ENCODE measurements at regions of chr1 and their contacts with region 1.

Region 1: DNA sequence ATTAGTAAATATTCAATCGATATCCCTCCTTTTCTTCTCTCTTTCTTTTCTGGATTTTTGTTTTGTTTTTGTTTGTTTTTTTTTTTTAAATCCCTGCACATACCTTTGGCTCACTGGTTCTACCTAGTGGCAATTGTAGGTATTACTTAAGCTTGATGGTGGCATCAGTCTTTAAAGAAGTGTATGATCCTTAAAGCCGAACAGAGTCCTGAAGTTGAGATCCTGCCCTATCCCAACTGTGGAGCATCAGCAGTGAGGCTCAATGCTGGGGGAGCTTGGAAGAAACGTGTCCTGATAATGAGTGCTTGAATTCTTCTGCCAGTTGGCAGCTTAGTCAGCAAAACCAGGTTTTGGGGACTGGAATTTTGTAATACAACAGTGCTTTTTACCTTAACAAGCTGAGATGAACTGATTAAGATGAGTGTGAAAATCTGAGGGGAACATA is 60.8 kb downstream of the FASLG start:
- DNase-seq: peak in 4 of 5 donors; percentile 54 to 60 (median 56)
- H3K4me3 ChIP-seq: no peak overlapping the region
- H3K4me3 Mint-ChIP-seq: peak overlapping the region in 1 of 8 donors; percentile 9
- H3K27ac ChIP-seq: no peak overlapping the region
- H3K27ac Mint-ChIP-seq: peak overlapping the region in 3 of 7 donors; percentile 3 to 37 (median 5)
- H3K4me1 ChIP-seq: peaks cover 16% of the 10 kb centered on the region
- H3K4me1 Mint-ChIP-seq: peaks cover 24 to 43% (median 31%) of the 10 kb centered on the region in 4 donors
- H3K27me3 ChIP-seq: no peaks in the 10 kb centered on the region
- H3K27me3 Mint-ChIP-seq: no peaks in the 10 kb centered on the region

Region 2: GRCh38 chr1:172429331-172430127 is 290.2 kb before region 1 on chr1:
- CTCF ChIA-PET with region 1: interaction called, 6 read pairs
- POLR2A ChIA-PET with region 1: no interaction called
- intact Hi-C with region 1: loop called (anchors 2 kb)
- DNase-seq: peak; percentile 49 to 63 (median 56)
- H3K4me3 ChIP-seq: no peak overlapping the region
- H3K4me3 Mint-ChIP-seq: peak overlapping the region in 2 of 8 donors; percentile 26 to 39
- H3K27ac ChIP-seq: no peak overlapping the region
- H3K27ac Mint-ChIP-seq: peak overlapping the region in 6 of 7 donors; percentile 5 to 72 (median 56)
- H3K4me1 ChIP-seq: peaks cover 59% of the 10 kb centered on the region
- H3K4me1 Mint-ChIP-seq: peaks cover 31 to 49% (median 41%) of the 10 kb centered on the region in 4 donors
- H3K27me3 ChIP-seq: no peaks in the 10 kb centered on the region
- H3K27me3 Mint-ChIP-seq: no peaks in the 10 kb centered on the region

Region 3: GRCh38 chr1:172545396-172546004 is 174.2 kb before region 1 on chr1:
- CTCF ChIA-PET with region 1: interaction called, 11 read pairs
- POLR2A ChIA-PET with region 1: no interaction called
- intact Hi-C with region 1: no loop called
- DNase-seq: no peak
- H3K4me3 ChIP-seq: no peak overlapping the region
- H3K4me3 Mint-ChIP-seq: no peak overlapping the region
- H3K27ac ChIP-seq: no peak overlapping the region
- H3K27ac Mint-ChIP-seq: no peak overlapping the region
- H3K4me1 ChIP-seq: peaks cover 90% of the 10 kb centered on the region
- H3K4me1 Mint-ChIP-seq: peaks cover 27 to 53% (median 40%) of the 10 kb centered on the region in 4 donors
- H3K27me3 ChIP-seq: no peaks in the 10 kb centered on the region
- H3K27me3 Mint-ChIP-seq: no peaks in the 10 kb centered on the region

Region 4: DNA sequence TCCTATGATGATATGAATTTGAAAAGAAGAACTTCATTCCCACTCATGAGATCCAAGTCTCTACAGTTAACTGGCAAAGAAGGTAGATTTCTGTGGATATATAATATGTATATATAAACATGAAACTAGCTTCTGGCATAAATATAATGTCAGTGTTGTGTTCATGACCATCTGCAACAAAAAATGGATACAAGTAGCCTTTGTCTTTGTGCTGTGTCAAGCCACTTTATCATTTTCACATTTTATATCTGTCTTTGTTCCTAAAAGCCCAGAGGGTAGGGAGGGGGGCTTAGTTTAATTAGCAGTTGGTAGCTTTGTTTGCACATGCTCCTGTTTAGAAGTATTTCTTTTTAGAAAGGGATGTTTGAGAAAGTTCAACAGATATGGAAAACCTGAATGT is 117.0 kb before region 1 on chr1:
- CTCF ChIA-PET with region 1: interaction called, 261 read pairs
- POLR2A ChIA-PET with region 1: interaction called, 5 read pairs
- intact Hi-C with region 1: no loop called
- DNase-seq: no peak
- H3K4me3 ChIP-seq: no peak overlapping the region
- H3K4me3 Mint-ChIP-seq: no peak overlapping the region
- H3K27ac ChIP-seq: no peak overlapping the region
- H3K27ac Mint-ChIP-seq: peak overlapping the region in 3 of 7 donors; percentile 3 to 38 (median 32)
- H3K4me1 ChIP-seq: no peaks in the 10 kb centered on the region
- H3K4me1 Mint-ChIP-seq: peaks cover 0 to 7% (median 1%) of the 10 kb centered on the region in 4 donors
- H3K27me3 ChIP-seq: no peaks in the 10 kb centered on the region
- H3K27me3 Mint-ChIP-seq: no peaks in the 10 kb centered on the region

Region 5: DNA sequence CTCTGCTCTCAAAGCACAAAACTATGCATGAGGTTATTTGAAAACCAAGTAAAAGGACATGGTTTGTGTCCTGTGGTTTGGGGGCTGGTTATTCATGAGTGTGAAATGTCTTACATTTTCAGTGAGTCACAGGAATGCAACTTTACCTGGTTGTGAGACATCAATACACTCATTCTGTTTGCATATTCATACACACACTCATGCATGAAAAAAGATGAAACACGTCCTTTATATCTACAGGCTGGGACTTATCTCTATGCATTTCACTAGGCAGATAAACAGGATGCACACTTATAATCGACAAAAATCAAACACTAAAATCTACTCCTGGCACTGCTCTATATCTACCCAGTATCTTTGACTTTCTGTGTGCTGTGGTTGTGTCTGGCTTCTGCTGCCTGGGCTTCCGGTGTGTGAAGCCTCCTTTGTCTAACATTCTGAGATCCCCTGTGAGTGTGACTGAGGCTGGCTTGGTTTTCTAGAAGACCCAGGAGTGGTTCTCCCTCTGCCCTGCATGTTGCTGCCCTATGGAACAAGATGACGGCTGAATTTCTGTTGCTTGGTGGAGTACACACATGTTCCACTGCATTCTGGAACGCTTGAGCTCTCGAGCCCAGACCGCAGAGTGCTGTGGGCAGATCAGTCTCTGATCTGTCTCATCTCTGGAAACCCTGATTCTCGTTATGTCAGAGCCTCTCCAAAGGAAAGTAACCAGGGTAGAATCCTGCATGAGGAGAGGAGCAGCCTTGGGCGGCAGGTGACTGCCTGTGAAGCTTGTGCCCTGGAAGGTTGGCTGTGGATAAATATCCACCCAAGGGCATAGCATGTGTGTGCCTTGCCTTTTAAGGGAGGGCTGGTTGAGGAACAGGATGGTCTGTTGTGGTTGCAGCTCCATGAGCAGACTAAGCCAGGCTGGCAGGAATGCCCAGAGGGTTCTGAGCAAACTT is 80.6 kb before region 1 on chr1:
- CTCF ChIA-PET with region 1: interaction called, 42 read pairs
- POLR2A ChIA-PET with region 1: interaction called, 10 read pairs
- intact Hi-C with region 1: loop called (anchors 1 kb)
- DNase-seq: peak; percentile 73 to 89 (median 77)
- H3K4me3 ChIP-seq: peak overlapping the region; percentile 25 to 27
- H3K4me3 Mint-ChIP-seq: peak overlapping the region; percentile 73 to 86 (median 80)
- H3K27ac ChIP-seq: peak overlapping the region; percentile 38
- H3K27ac Mint-ChIP-seq: peak overlapping the region; percentile 82 to 94 (median 90)
- H3K4me1 ChIP-seq: peaks cover 74% of the 10 kb centered on the region
- H3K4me1 Mint-ChIP-seq: peaks cover 62 to 77% (median 72%) of the 10 kb centered on the region in 4 donors
- H3K27me3 ChIP-seq: no peaks in the 10 kb centered on the region
- H3K27me3 Mint-ChIP-seq: no peaks in the 10 kb centered on the region

Region 6: GRCh38 chr1:172699111-172699510 is 20.6 kb before region 1 on chr1:
- CTCF ChIA-PET with region 1: interaction called, 16 read pairs
- POLR2A ChIA-PET with region 1: interaction called, 4 read pairs
- intact Hi-C with region 1: no loop called
- DNase-seq: peak; percentile 72 to 92 (median 77)
- H3K4me3 ChIP-seq: peak overlapping the region; percentile 17 to 38
- H3K4me3 Mint-ChIP-seq: peak overlapping the region; percentile 67 to 85 (median 76)
- H3K27ac ChIP-seq: peak overlapping the region; percentile 64
- H3K27ac Mint-ChIP-seq: peak overlapping the region in 6 of 7 donors; percentile 92 to 96 (median 94)
- H3K4me1 ChIP-seq: peaks cover 85% of the 10 kb centered on the region
- H3K4me1 Mint-ChIP-seq: peaks cover 0 to 54% (median 30%) of the 10 kb centered on the region in 4 donors
- H3K27me3 ChIP-seq: no peaks in the 10 kb centered on the region
- H3K27me3 Mint-ChIP-seq: no peaks in the 10 kb centered on the region

Region 7: DNA sequence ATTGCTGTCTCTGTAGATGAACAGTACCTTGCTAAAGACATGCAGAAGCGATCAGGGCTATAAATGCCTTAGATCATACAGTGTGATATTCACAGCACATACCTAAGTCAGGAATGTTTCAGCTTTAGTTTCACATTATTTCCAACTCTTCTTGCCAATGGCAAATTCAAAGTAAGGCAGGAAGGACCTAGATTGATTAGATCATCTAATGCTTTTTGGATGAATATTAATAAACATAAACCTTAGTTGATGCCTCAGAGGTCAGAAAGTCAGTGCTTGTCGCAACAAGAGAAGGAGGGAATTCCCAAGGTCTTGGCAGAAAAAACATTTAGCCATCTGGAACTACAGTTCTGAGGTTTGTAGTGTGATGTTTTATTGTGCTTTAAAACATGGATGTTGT is 208.7 kb after region 1 on chr1:
- CTCF ChIA-PET with region 1: no interaction called
- POLR2A ChIA-PET with region 1: no interaction called
- intact Hi-C with region 1: no loop called
- DNase-seq: no peak
- H3K4me3 ChIP-seq: no peak overlapping the region
- H3K4me3 Mint-ChIP-seq: no peak overlapping the region
- H3K27ac ChIP-seq: no peak overlapping the region
- H3K27ac Mint-ChIP-seq: no peak overlapping the region
- H3K4me1 ChIP-seq: peaks cover 1% of the 10 kb centered on the region
- H3K4me1 Mint-ChIP-seq: peaks cover 2 to 8% (median 6%) of the 10 kb centered on the region in 4 donors
- H3K27me3 ChIP-seq: no peaks in the 10 kb centered on the region
- H3K27me3 Mint-ChIP-seq: no peaks in the 10 kb centered on the region